Activated CD4-positive, alpha-beta memory T cell treated with anti-CD3 and anti-CD28 coated beads for 36 hours (primary cell): ENCODE measurements at regions of chr5 and their contacts with region 1.

Region 1: GRCh38 chr5:168706655-168707069 is 127.5 kb upstream of the PANK3 start:
- DNase-seq: peak; percentile 49
- H3K4me3 Mint-ChIP-seq: no peak overlapping the region
- H3K27ac Mint-ChIP-seq: no peak overlapping the region
- H3K4me1 Mint-ChIP-seq: no peaks in the 10 kb centered on the region
- H3K27me3 Mint-ChIP-seq: peaks cover 1% of the 10 kb centered on the region

Region 2: DNA sequence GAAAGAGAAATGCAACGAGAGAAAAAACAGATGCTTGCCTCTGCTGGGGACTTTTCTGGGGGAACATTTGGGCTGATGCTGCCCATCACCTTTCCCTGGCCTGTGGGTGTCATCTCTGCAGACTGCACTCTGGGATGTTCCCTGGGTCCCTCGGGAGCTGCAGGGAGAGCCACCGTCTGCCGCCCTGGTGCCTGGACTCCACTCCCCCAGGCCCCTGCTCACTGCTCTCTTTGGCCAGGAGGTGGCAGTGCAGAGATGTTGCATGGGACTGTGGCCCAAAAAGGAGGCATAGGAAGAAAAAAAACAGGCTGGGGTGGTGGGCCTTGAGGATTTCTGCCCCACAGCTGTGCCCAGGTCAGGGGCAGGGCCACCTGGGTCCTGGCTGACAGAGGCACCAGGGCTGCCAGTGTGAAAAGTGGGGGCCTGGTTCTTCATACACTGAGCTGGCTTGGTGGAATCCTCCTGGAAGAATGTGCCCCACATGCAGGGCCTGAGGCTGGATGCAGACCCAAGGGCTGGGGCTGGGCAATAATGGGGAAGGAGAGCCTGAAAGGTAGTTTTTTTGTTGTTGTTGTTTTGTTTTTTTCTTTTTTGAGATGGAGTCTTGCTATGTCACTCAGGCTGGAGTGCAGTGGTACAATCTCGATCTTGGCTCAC is 240.7 kb after region 1 on chr5:
- CTCF ChIA-PET with region 1: interaction called, 8 read pairs
- POLR2A ChIA-PET with region 1: no interaction called
- intact Hi-C with region 1: loop called (anchors 10 kb)
- DNase-seq: peak; percentile 57
- H3K4me3 Mint-ChIP-seq: no peak overlapping the region
- H3K27ac Mint-ChIP-seq: no peak overlapping the region
- H3K4me1 Mint-ChIP-seq: peaks cover 13% of the 10 kb centered on the region
- H3K27me3 Mint-ChIP-seq: no peaks in the 10 kb centered on the region

Region 3: GRCh38 chr5:169302491-169303118 is 595.9 kb after region 1 on chr5:
- CTCF ChIA-PET with region 1: no interaction called
- POLR2A ChIA-PET with region 1: no interaction called
- intact Hi-C with region 1: loop called (anchors 1 kb)
- DNase-seq: peak; percentile 72
- H3K4me3 Mint-ChIP-seq: no peak overlapping the region
- H3K27ac Mint-ChIP-seq: no peak overlapping the region
- H3K4me1 Mint-ChIP-seq: peaks cover 14% of the 10 kb centered on the region
- H3K27me3 Mint-ChIP-seq: peaks cover 56% of the 10 kb centered on the region